Left ventricle myocardium superior (tissue), 1 donor: ENCODE measurements at regions of chr2 and their contacts with region 1.

Region 1: DNA sequence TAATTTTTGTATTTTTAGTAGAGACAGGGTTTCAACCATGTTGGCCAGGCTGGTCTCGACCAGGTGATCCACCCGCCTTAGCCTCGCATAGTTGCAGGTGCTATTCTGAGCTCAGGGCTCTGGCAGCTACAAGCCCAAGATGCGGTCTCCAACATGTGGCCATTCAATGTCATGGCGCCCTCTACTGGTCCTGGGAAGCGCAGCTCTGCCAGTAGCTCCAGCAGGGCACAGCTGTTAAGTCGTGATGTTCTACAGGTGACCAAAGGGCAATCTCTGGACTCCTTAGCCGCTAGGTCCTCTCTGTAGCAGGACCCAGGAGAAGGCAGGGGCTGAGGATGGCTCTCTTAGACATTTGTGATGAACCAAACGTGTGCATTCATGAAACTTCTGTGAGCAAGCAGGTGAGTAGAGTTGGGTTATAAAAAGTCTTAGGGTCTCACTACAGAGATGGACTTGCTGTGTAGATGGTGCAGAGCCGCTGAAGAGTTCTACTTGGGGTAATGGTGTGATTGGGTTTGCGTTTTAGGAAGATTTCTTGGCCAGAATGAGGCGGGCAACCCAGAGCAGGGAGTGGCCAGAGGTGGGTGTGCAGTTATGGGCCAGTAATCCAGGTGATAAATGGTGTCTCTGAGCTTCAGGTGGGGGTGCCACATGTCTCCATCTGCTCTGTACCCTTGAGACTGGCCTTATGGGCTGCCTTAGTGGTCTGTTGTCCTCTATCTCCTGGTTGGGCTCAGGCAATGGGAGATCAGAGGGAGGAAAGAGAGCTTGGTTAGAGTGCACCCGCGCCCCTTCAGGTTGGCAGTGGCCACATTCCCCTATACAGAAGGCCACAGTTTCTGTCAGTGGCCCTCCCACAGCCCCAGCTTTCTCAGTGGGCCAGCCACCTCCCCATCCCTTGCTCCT is 31.0 kb downstream of the IL37 start:
- DNase-seq: peak; percentile 55
- ATAC-seq: peak; percentile 61

Region 2: DNA sequence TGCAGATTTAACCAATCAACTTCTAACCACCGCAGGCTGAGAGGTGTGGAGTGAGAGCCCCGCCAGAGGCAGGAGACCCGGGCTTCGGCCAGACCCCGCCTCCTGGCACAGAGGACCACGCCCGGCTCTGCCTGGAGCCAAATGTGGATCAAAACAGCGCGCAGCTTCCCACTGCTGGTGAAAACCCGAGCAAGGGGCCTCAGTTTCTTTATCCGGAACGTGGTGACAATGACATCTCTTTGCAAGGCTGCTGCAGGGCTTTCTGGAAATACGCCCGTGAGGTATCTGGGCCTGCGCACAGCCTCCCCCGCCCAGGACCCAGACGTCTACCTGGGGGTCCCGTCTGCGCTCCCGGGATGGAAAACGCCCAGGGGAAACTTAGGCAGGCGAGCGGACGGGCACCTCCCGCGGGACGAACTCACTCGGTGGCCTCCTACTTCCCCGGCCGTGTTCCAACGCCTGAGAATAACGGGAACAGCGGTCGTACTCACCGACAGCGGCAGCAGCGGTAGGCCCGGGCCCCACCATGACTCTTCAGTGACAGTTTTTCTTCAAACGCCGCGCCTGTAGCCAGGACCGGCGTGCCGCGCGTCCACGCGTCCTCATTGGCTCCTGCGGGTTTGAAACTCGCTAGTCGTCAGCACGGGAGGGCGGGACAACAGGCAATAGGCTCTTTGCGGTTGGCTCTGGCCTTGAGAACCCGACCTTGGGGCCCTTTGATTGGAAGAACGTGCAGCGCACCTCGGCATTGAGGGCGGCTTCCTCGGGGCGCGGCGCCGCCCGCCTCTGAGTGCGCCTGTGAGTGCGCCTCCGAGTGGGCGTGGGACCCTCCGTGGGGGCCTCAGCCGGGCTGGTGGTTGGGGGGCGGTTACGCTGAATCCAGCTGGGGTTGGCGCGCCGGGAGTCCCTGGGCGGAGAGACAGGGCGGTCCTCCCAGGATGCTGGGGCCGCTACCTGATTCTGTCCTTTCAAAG is 177.6 kb before region 1 on chr2 and contains the start of gene CKAP2L:
- intact Hi-C with region 1: loop called (anchors 10 kb)
- DNase-seq: peak; percentile 96
- ATAC-seq: peak; percentile 100
- total RNA-seq, gene CKAP2L: 0.10 TPM

Region 3: DNA sequence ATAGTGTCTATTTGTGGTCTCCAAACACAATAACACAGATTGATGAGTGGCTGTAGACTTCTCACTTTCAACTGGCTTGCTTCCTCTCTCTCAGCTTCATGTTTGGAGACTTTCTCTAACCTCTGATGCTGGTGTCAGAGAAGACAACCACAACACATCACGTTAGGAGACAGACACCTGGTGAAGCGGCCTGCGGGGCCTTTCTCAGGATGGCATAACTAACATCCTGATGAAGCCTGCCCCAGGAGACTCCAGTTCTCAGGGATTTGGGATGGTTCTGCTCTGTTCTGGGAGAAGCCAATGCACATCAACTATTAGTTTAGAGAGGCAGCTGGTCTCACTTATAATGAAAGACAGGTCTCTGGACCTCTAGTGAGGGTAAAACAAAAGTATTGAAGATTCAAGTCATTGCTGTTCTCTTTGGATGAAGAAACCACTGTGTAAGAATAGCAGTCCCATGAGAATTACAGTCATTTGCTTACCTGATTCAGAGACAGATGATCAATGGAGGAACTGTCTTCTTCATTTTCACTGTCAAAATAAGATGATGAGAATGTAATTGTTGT is 159.7 kb before region 1 on chr2:
- intact Hi-C with region 1: no loop called
- DNase-seq: no peak
- ATAC-seq: no peak

Region 4: GRCh38 chr2:112915300-112916144 is 26.5 kb before region 1 on chr2:
- intact Hi-C with region 1: no loop called
- DNase-seq: no peak
- ATAC-seq: no peak